ENCODE measurements at regions of chr15 and their contacts with region 1.

Region 1: GRCh38 chr15:63945007-63945788 is 101.1 kb downstream of the DAPK2 start:
- DNase-seq: peak; percentile 73
- H3K4me3 Mint-ChIP-seq: no peak overlapping the region
- H3K27ac Mint-ChIP-seq: no peak overlapping the region
- H3K4me1 Mint-ChIP-seq: peaks cover 17% of the 10 kb centered on the region
- H3K27me3 Mint-ChIP-seq: no peaks in the 10 kb centered on the region
- CTCF ChIP-seq: peak; percentile 84

Region 2: DNA sequence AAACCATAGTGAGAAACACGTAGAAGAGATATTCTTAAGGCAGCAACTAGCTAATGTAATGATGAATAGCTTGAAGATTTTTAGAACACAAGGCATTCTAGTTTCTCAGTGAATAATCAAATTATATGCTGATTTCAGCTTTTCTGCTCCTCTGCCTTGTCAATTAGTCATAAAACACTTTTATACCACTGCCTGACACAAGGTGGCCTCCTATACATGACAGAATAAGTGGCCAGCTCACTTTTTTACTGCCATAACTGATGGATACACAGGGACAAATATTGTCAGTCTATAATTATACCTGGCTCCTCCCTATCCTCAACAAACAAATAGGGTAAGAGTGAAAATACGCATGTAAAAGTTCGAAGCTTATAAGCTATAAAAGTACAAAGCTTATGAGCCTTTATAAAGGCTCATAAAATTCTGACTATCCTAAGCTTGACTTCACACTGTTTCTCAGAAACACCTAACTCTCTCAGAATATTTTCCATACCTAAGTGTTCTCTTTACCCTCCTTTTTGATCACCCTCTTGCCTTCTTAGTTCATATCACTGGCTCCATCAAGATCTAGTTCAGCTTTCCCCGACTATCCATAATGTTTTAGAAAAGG is 193.0 kb before region 1 on chr15:
- CTCF ChIA-PET with region 1: interaction called, 17 read pairs
- POLR2A ChIA-PET with region 1: no interaction called
- intact Hi-C with region 1: no loop called
- DNase-seq: peak; percentile 68
- H3K4me3 Mint-ChIP-seq: no peak overlapping the region
- H3K27ac Mint-ChIP-seq: peak overlapping the region; percentile 17
- H3K4me1 Mint-ChIP-seq: no peaks in the 10 kb centered on the region
- H3K27me3 Mint-ChIP-seq: no peaks in the 10 kb centered on the region
- CTCF ChIP-seq: peak; percentile 80

Region 3: GRCh38 chr15:63933522-63933921 is 11.7 kb before region 1 on chr15:
- CTCF ChIA-PET with region 1: interaction called, 12 read pairs
- POLR2A ChIA-PET with region 1: interaction called, 9 read pairs
- intact Hi-C with region 1: no loop called
- DNase-seq: peak; percentile 60
- H3K4me3 Mint-ChIP-seq: no peak overlapping the region
- H3K27ac Mint-ChIP-seq: no peak overlapping the region
- H3K4me1 Mint-ChIP-seq: no peaks in the 10 kb centered on the region
- H3K27me3 Mint-ChIP-seq: no peaks in the 10 kb centered on the region
- CTCF ChIP-seq: no peak

Region 4: DNA sequence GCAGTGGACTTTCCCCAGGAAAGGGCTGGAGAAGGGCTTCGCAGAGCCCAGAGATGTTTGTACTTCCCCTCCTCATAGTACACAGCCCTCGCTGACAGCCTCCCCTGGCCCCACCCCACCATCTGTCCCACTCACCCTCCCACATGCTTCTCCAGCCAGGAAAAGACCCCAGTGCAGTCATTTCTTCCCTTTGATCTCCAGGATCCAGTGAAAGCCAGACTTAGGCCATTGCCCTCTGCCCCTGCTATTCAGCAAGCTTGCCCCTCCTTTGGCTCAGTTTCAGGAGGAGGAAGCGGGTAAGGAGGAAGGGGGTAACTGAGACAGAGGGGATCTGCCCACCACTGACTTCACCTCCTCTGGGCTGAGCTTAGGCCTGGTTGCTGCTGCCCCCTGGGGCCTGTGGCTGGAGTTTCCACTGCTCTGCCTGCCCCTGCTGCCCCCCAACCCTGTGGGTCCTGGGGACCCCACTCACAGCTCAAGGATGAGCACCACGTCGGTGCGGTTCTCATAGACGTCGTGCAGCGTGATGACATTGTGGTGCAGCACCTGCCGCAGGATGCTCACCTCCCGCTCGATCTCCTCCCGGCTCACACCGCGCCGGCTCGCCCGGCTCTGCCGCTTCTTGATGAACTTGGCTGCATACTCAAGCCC is 38.0 kb after region 1 on chr15:
- CTCF ChIA-PET with region 1: interaction called, 14 read pairs
- POLR2A ChIA-PET with region 1: interaction called, 6 read pairs
- intact Hi-C with region 1: no loop called
- DNase-seq: no peak
- H3K4me3 Mint-ChIP-seq: no peak overlapping the region
- H3K27ac Mint-ChIP-seq: no peak overlapping the region
- H3K4me1 Mint-ChIP-seq: no peaks in the 10 kb centered on the region
- H3K27me3 Mint-ChIP-seq: no peaks in the 10 kb centered on the region
- CTCF ChIP-seq: no peak

Region 5: DNA sequence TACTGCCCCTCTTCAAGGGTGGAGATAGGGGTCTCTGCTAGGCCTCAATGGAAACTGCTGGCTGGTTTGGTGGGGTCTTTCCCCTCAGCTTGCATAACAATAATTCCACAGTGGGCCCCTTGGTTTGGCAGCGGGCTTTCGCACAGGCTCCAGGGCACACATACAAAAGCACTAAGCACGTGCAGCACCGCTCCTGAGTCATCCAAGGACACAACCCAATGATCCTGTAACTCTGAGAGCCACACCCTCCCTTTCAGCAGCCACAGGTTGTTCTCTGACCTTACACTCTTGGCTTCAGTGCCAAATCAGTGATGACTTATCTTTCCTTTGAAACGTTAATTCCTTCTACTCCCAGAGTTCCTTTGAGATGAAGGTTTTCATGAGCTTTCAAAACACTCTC is 59.4 kb after region 1 on chr15:
- CTCF ChIA-PET with region 1: interaction called, 41 read pairs
- POLR2A ChIA-PET with region 1: interaction called, 28 read pairs
- intact Hi-C with region 1: loop called (anchors 5 kb)
- DNase-seq: peak; percentile 98
- H3K4me3 Mint-ChIP-seq: no peak overlapping the region
- H3K27ac Mint-ChIP-seq: peak overlapping the region; percentile 65
- H3K4me1 Mint-ChIP-seq: peaks cover 64% of the 10 kb centered on the region
- H3K27me3 Mint-ChIP-seq: no peaks in the 10 kb centered on the region
- CTCF ChIP-seq: no peak

Region 6: DNA sequence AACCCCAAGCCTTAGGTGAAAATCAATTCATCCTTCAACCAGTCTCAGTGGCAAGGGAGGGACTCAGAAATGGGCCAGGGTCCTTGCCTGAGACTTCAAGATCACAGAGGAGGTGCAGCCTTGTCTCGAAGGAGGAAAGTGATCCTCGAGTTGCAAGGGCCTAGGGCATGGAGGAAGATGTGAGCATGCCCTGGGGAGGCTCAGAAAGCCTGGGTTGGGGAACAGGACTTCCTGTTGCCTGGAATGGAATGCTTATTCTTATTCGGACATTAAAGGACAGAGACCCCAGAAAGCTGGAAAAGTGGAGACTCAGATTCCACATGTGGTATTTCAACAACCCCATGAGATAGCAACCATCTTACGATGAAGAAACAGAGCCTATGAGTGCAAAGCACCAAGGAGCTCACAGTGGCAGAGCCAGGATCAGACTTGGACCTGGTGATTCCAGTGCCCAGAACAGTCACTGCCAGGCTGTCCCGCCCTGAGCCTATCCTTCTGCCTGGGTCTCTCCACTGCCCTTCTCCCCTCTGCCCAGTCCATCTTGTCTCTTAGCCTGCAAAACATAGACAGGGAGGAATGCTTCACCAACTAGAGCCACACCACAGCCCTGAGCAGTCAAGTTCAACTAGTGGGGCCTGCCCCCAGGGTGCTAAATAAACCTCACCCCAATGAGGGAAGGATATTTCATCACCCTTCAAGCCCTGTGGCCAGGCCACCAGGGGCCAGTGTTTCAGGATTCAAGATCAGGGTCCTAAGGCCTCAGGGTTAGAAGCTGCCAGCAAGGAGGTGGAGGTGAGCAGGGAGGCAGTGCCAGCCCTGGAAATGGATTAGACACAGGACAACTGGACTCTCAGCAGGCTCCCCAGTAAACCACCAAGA is 79.2 kb after region 1 on chr15:
- CTCF ChIA-PET with region 1: interaction called, 13 read pairs
- POLR2A ChIA-PET with region 1: no interaction called
- intact Hi-C with region 1: no loop called
- DNase-seq: peak; percentile 41
- H3K4me3 Mint-ChIP-seq: no peak overlapping the region
- H3K27ac Mint-ChIP-seq: no peak overlapping the region
- H3K4me1 Mint-ChIP-seq: peaks cover 25% of the 10 kb centered on the region
- H3K27me3 Mint-ChIP-seq: no peaks in the 10 kb centered on the region
- CTCF ChIP-seq: no peak

Region 7: DNA sequence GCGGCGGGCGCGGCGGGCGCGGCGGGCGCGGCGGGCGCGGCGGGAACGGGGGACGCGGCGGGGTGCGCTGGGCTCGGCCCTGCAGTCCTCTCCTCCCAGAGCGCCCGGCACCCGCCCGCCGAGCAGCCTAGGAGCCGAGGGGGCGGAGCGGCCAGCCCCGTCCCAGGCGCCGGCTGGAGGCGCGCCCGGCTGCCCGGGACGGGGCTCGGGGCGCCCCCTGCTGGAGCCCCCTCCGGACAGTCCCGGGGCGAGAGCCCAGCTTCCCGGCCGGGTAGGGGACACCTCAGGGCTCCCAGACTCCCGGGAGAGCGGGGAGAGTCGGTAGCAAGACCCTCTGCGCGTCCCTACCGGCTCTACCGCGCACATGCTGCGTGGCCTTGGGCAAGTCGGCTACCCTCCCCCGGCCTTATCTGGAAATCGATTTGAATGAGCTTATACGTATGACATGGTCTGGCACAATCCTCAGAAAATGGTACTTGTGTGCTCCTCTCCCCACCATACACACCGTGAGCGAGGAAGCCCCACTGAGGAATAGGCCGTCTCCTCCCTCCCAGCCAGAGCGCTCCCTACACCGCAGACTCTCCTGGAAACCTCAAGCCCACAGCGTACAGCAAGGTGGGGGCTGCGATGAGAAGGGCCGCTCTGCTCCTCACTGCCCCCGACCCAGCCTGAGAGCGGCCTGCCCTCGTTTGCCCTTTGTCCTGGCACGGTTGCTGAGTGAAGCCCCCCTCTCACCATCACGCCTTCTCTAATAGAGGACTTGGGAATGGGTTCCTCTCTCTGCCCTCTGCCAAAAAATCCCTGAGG is 101.4 kb after region 1 on chr15 and contains the start of gene DAPK2:
- CTCF ChIA-PET with region 1: interaction called, 109 read pairs
- POLR2A ChIA-PET with region 1: interaction called, 23 read pairs
- intact Hi-C with region 1: loop called (anchors 1 kb)
- DNase-seq: peak; percentile 72
- H3K4me3 Mint-ChIP-seq: peak within 1 kb of the TSS; percentile 62
- H3K27ac Mint-ChIP-seq: no peak within 1 kb of the TSS
- H3K4me1 Mint-ChIP-seq: peaks cover 5% of the 10 kb centered on the region
- H3K27me3 Mint-ChIP-seq: peaks cover 12% of the 10 kb centered on the region
- CTCF ChIP-seq: peak; percentile 86
- total RNA-seq, gene DAPK2: 4.6 and 6.8 TPM in 2 replicates

Measured in MCF 10A (cell line).